ENCODE measurements at regions of chr5 and their contacts with region 1.

Region 1: DNA sequence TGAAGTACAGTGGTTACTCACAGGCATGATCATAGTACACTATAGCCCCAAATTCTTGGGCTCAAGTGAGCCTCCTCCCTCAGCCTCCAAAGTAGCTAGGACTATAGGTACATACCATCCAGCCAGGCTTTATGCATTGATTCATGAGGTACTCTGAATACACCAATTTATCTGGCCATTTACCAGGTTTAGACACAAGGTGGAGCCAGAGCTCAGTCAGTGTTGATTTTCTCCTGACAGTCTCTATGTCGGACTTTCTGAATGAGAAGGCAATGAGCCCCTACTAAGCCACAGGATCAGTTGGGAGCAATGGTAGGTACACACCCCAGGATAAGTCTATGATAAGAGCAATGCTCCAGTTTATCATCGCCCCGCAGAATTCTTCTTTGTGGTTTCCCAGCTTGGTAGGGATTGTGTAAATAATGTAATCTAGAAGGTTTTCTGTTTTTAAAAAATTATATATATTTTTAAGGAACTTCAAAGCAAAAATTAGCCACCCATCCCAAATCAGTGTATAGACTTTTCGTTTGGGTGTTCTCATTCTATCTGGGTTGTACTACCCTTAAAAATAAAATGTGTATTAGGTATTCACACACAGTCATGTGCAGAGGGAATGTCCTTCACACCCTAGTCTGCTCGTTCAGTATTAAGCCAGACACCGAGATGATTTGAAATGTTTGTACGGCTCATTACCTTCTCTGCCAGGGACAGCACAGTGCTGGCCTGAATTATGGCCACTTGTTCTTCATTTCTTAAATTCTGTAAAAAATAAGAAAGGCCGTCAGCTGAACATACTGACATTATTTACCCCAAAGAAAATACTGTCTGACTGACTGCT is 118.4 kb upstream of the DPYSL3 start:
- DNase-seq: peak in 4 of 5 donors; percentile 26 to 44 (median 36)
- H3K4me3 ChIP-seq: no peak overlapping the region
- H3K27ac ChIP-seq: no peak overlapping the region
- H3K4me1 ChIP-seq: no peaks in the 10 kb centered on the region
- H3K27me3 ChIP-seq: no peaks in the 10 kb centered on the region
- CTCF ChIP-seq: peak in 2 of 3 donors; percentile 26 to 62
- EP300 ChIP-seq: no peak
- POLR2A ChIP-seq: no peak

Region 2: GRCh38 chr5:147822686-147823491 is 194.6 kb after region 1 on chr5:
- intact Hi-C with region 1: loop called in 3 of 4 experiments (anchors 2 to 5 kb)
- DNase-seq: peak in 4 of 5 donors; percentile 13 to 36 (median 21)
- H3K4me3 ChIP-seq: no peak overlapping the region
- H3K27ac ChIP-seq: no peak overlapping the region
- H3K4me1 ChIP-seq: no peaks in the 10 kb centered on the region
- H3K27me3 ChIP-seq: no peaks in the 10 kb centered on the region
- CTCF ChIP-seq: peak in 2 of 3 donors; percentile 63 to 85
- EP300 ChIP-seq: no peak
- POLR2A ChIP-seq: no peak